ENCODE measurements at regions of chr9 and their contacts with region 1.

Region 1: GRCh38 chr9:104780799-104781395 is 17.0 kb downstream of the NIPSNAP3B start:
- DNase-seq: no peak
- ATAC-seq: peak; percentile 47
- H3K4me3 Mint-ChIP-seq: no peak overlapping the region
- H3K27ac Mint-ChIP-seq: peak overlapping the region; percentile 65
- H3K4me1 Mint-ChIP-seq: peaks cover 34% of the 10 kb centered on the region
- H3K27me3 Mint-ChIP-seq: no peaks in the 10 kb centered on the region
- CTCF ChIP-seq: peak; percentile 27

Region 2: GRCh38 chr9:104765138-104765537 is 15.8 kb before region 1 on chr9:
- CTCF ChIA-PET with region 1: interaction called, 6 read pairs
- POLR2A ChIA-PET with region 1: interaction called, 32 read pairs
- intact Hi-C with region 1: loop called (anchors 1 kb)
- DNase-seq: no peak
- ATAC-seq: peak; percentile 8
- H3K4me3 Mint-ChIP-seq: peak overlapping the region; percentile 90
- H3K27ac Mint-ChIP-seq: peak overlapping the region; percentile 90
- H3K4me1 Mint-ChIP-seq: peaks cover 44% of the 10 kb centered on the region
- H3K27me3 Mint-ChIP-seq: no peaks in the 10 kb centered on the region
- CTCF ChIP-seq: no peak

Region 3: GRCh38 chr9:104802110-104802509 is 21.2 kb after region 1 on chr9:
- CTCF ChIA-PET with region 1: interaction called, 3 read pairs
- POLR2A ChIA-PET with region 1: no interaction called
- intact Hi-C with region 1: loop called (anchors 2 kb)
- DNase-seq: no peak
- ATAC-seq: no peak
- H3K4me3 Mint-ChIP-seq: no peak overlapping the region
- H3K27ac Mint-ChIP-seq: no peak overlapping the region
- H3K4me1 Mint-ChIP-seq: no peaks in the 10 kb centered on the region
- H3K27me3 Mint-ChIP-seq: no peaks in the 10 kb centered on the region
- CTCF ChIP-seq: no peak

Region 4: GRCh38 chr9:104863180-104863883 is 82.4 kb after region 1 on chr9:
- CTCF ChIA-PET with region 1: interaction called, 10 read pairs
- POLR2A ChIA-PET with region 1: no interaction called
- intact Hi-C with region 1: loop called (anchors 5 kb)
- DNase-seq: no peak
- ATAC-seq: peak; percentile 74
- H3K4me3 Mint-ChIP-seq: no peak overlapping the region
- H3K27ac Mint-ChIP-seq: no peak overlapping the region
- H3K4me1 Mint-ChIP-seq: peaks cover 53% of the 10 kb centered on the region
- H3K27me3 Mint-ChIP-seq: no peaks in the 10 kb centered on the region
- CTCF ChIP-seq: no peak

Region 5: DNA sequence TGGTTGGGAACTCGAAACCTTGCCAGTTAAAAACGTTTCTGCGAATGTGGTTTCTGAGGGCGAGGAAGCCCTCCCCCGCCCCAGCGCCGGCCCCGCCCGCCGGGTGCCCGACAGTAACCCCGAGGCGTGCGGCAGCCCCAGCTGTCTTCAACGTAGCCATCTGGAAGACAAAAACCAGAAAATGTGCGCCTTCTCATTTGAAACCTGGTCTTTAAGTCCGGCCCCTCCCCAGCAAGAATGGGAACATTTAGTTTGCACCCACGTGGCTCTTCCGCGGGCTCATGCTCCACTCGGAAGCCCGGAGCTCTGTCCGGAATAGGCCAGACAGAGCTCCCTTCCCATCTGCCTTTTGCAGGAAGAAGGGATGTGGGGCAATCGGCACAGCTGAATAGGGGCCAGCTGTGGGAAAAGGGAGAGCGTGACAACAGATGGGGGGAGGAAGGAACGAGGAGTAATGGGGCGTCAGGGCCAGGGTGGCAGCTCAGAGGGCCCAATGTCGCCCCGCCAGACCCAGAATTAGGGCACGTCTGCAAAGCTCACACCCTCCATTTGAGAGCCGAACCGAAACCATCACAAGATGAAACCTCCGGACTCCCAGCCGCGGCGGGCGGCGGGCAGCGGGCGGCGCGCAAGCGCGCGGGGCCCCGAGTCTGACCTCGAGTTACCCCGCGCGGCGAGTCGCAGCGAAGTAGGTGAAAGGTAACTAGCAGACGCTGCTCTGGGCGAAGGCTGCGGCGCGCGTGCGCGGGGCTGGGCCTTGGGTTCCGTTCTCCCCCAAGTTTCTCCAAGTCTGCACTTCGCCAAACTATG is 210.5 kb after region 1 on chr9:
- CTCF ChIA-PET with region 1: no interaction called
- POLR2A ChIA-PET with region 1: no interaction called
- intact Hi-C with region 1: loop called (anchors 5 kb)
- DNase-seq: peak; percentile 69
- ATAC-seq: peak; percentile 80
- H3K4me3 Mint-ChIP-seq: peak overlapping the region; percentile 86
- H3K27ac Mint-ChIP-seq: peak overlapping the region; percentile 69
- H3K4me1 Mint-ChIP-seq: peaks cover 33% of the 10 kb centered on the region
- H3K27me3 Mint-ChIP-seq: peaks cover 2% of the 10 kb centered on the region
- CTCF ChIP-seq: no peak

Region 6: DNA sequence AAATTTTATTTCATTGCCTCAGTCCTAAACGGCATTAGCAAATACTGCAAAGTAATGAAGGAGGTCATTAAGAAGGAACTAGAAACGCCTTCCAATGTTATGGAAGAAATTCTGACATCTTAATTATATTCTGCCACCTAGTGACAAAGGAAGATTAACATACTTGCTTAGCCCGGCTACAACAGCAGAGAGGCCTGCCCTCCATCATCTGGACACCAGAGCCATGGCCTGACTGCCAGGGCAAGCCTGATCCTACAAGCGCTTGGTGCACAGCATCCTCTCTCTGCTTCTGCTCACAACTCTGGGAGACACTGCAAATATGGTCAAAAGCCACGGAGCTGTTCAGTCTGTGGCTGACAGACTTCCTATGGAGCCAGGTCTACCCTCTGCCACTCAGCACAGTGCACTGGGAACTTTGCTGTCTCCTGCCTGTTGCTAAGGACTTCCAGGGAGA is 376.3 kb after region 1 on chr9:
- CTCF ChIA-PET with region 1: interaction called, 4 read pairs
- POLR2A ChIA-PET with region 1: no interaction called
- intact Hi-C with region 1: loop called (anchors 1 kb)
- DNase-seq: no peak
- ATAC-seq: peak; percentile 50
- H3K4me3 Mint-ChIP-seq: no peak overlapping the region
- H3K27ac Mint-ChIP-seq: no peak overlapping the region
- H3K4me1 Mint-ChIP-seq: no peaks in the 10 kb centered on the region
- H3K27me3 Mint-ChIP-seq: no peaks in the 10 kb centered on the region
- CTCF ChIP-seq: no peak

Region 7: DNA sequence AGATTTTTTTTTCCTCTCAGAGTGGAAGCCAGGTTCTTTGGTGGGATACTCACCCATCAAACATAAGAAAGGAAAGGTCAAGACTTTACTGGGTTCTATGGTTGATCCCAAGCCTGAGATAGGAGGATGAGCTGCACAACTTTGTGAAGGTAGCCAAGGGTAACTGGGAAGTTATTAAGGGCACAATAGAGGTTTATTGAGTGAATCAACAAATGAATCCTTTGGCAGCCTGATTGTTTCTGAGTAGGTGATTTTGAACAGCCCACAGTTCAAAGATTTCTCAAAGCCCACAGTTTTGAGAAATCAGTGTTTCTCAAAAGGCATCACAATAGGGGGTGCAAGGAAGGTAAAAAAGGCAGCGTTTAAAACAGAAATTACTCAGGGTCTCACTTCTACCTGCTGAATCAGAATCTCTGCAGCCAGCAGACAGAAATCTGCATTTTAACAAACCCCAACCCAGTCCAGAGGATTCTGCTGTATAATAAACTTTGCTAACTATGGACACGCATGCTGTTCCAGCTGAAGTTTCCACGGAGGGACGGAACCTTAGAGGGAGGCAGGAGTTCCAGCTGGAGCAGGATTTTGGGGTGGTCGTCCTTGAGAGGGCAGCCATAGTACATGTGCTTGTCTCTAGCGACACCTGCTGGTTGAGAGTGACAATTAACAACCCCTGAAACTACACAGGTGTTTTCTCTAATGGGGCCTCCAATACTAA is 634.2 kb after region 1 on chr9:
- CTCF ChIA-PET with region 1: interaction called, 12 read pairs
- POLR2A ChIA-PET with region 1: no interaction called
- intact Hi-C with region 1: loop called (anchors 1 kb)
- DNase-seq: peak; percentile 18
- ATAC-seq: peak; percentile 85
- H3K4me3 Mint-ChIP-seq: no peak overlapping the region
- H3K27ac Mint-ChIP-seq: no peak overlapping the region
- H3K4me1 Mint-ChIP-seq: peaks cover 4% of the 10 kb centered on the region
- H3K27me3 Mint-ChIP-seq: no peaks in the 10 kb centered on the region
- CTCF ChIP-seq: no peak